Heart left ventricle (tissue), 16 donors: ENCODE measurements at regions of chr18 and their contacts with region 1.

Region 1: GRCh38 chr18:50240083-50240563 is 26.2 kb downstream of the CFAP53 start:
- DNase-seq: no peak
- ATAC-seq: no peak
- H3K4me3 ChIP-seq: no peak overlapping the region
- H3K27ac ChIP-seq: no peak overlapping the region
- H3K4me1 ChIP-seq: no peaks in the 10 kb centered on the region
- H3K27me3 ChIP-seq: no peaks in the 10 kb centered on the region
- CTCF ChIP-seq: no peak
- POLR2A ChIP-seq: no peak

Region 2: GRCh38 chr18:50312296-50313030 is 72.3 kb after region 1 on chr18:
- intact Hi-C with region 1: loop called in 1 of 10 experiments (anchors 10 kb)
- DNase-seq: no peak
- ATAC-seq: no peak
- H3K4me3 ChIP-seq: no peak overlapping the region
- H3K27ac ChIP-seq: no peak overlapping the region
- H3K4me1 ChIP-seq: peaks cover 0 to 11% (median under 1%) of the 10 kb centered on the region in 12 donors
- H3K27me3 ChIP-seq: peaks cover 0 to 14% (median 0%) of the 10 kb centered on the region in 9 donors
- CTCF ChIP-seq: no peak
- POLR2A ChIP-seq: no peak